ENCODE measurements at regions of chr10 and their contacts with region 1.

Region 1: DNA sequence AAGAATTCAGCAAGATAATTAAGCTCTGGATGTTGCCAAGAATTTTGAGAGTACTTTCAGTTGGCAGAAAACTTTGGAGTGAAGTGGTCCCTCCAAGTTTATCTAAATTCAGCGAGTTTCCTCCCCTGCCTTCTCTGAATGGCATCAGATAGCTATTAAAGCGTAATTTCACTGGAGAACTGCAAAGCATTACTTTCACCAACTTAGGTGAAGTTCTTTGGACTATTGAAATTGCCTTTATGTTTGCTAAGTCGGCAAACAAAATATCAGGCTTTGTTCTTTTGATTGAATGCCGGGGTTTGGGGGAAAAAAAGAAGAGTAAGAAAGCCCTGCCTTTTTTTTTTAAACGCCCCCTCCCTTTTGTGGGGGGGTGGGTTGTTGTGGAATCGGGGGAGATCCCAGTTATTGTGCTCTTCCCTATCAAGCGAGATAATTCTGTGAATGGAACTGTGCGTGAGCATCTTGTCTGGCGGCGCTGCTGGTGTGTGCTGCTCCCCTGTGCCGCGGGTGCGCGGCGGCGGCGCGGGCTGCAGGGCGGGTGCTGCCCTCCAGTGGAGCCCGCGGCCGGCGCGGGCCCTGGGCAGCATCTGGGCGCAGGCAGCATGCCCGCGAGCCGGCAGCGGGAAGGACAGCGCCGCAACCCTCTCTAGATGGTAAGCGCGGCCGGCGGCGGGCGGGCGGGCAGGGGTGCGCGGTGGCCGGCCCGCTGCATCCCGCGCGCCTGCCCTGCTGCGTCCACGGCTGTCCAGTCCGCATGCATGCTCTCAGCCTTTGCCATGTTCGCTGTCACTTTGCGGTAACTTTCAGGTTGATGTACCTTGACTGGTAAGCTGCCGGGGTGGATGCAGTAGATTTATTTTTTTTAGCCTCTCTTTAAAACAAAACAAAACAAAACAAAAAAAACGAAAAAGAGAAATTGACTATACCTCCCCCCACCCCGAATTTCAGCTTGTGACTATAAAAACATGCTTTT is 176.5 kb downstream of the TCF7L2 start:
- DNase-seq: peak; percentile 56
- H3K4me3 ChIP-seq: peak overlapping the region; percentile 19 to 23
- H3K27ac ChIP-seq: no peak overlapping the region
- H3K4me1 ChIP-seq: no peaks in the 10 kb centered on the region
- H3K27me3 ChIP-seq: no peaks in the 10 kb centered on the region
- CTCF ChIP-seq: peak; percentile 67 to 87 (median 78)
- POLR2A ChIP-seq: no peak

Region 2: DNA sequence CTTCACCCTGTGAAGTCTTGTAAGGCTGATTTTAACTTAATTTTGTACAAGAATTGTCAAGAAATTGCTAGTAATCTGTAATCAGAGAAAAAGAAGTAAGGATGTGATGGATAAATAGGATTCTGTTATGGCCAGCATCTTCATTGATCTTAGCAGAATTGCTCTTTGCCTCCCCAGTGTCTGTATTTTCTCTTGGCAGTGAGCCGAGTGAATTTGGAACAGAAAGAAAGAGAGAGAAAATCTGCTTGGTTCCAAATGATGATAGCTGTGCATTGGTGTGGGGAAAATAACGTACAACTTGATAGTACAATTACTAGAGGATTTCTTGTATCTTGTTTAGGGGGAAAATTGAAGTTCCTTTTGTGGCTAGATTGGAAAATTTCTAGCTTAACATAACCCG is 644.9 kb before region 1 on chr10:
- intact Hi-C with region 1: loop called (anchors 10 kb)
- DNase-seq: no peak
- H3K4me3 ChIP-seq: no peak overlapping the region
- H3K27ac ChIP-seq: no peak overlapping the region
- H3K4me1 ChIP-seq: no peaks in the 10 kb centered on the region
- H3K27me3 ChIP-seq: no peaks in the 10 kb centered on the region
- CTCF ChIP-seq: no peak
- POLR2A ChIP-seq: no peak

Region 3: GRCh38 chr10:112835944-112836451 is 290.5 kb before region 1 on chr10:
- intact Hi-C with region 1: loop called (anchors 10 kb)
- DNase-seq: no peak
- H3K4me3 ChIP-seq: no peak overlapping the region
- H3K27ac ChIP-seq: no peak overlapping the region
- H3K4me1 ChIP-seq: no peaks in the 10 kb centered on the region
- H3K27me3 ChIP-seq: no peaks in the 10 kb centered on the region
- CTCF ChIP-seq: no peak
- POLR2A ChIP-seq: no peak

Region 4: GRCh38 chr10:112949875-112950507 is 176.5 kb before region 1 on chr10 and contains the start of gene TCF7L2:
- intact Hi-C with region 1: loop called (anchors 5 kb)
- DNase-seq: peak; percentile 97
- H3K4me3 ChIP-seq: peak within 1 kb of the TSS; percentile 68 to 78
- H3K27ac ChIP-seq: peak within 1 kb of the TSS; percentile 91 to 98
- H3K4me1 ChIP-seq: peaks cover 17% of the 10 kb centered on the region
- H3K27me3 ChIP-seq: no peaks in the 10 kb centered on the region
- CTCF ChIP-seq: no peak
- POLR2A ChIP-seq: peak; percentile 77
- total RNA-seq, gene TCF7L2: 9.8 to 29.8 TPM

Region 5: DNA sequence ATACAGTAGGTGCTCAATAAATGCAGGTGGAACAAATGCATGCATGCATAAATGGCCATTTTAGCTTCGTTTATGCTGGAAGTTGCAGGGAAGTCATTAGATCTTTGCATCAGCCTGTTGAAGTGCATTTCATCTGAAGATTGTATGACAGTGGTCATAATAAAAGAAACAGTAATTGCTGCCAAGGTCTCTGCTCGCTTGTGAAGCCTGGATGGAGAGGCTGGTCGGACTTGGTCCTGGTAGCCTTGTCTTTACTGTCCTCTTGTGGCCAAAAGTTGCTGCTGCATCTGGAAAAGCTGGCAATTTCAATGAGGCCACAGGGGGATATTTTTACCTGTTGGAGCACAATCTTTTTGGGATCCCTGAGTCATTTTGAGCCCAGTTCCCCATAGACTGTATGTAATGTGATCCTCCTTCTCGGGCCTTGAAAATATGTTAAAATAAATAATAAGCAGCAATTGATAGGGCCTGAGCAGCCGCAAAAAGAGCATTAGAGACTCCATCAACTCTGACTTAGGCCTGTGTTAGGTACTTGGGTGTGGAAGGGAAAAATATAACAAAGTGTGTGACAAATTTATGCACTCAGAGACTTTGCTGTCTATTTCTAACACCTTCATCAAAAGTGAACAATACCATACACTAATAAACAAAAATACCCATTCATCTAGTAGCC is 394.7 kb after region 1 on chr10:
- intact Hi-C with region 1: loop called (anchors 5 kb)
- DNase-seq: peak; percentile 75
- H3K4me3 ChIP-seq: no peak overlapping the region
- H3K27ac ChIP-seq: no peak overlapping the region
- H3K4me1 ChIP-seq: peaks cover 2% of the 10 kb centered on the region
- H3K27me3 ChIP-seq: no peaks in the 10 kb centered on the region
- CTCF ChIP-seq: peak; percentile 91 to 98 (median 96)
- POLR2A ChIP-seq: no peak

Measured in prostate gland (tissue), 2 donors.